AG04449 (cell line): ENCODE measurements at regions of chr3 and their contacts with region 1.

Region 1: GRCh38 chr3:52291508-52292181 is 4.0 kb downstream of the GLYCTK start:
- DNase-seq: no peak
- H3K4me3 ChIP-seq: no peak overlapping the region
- CTCF ChIP-seq: peak; percentile 56

Region 2: DNA sequence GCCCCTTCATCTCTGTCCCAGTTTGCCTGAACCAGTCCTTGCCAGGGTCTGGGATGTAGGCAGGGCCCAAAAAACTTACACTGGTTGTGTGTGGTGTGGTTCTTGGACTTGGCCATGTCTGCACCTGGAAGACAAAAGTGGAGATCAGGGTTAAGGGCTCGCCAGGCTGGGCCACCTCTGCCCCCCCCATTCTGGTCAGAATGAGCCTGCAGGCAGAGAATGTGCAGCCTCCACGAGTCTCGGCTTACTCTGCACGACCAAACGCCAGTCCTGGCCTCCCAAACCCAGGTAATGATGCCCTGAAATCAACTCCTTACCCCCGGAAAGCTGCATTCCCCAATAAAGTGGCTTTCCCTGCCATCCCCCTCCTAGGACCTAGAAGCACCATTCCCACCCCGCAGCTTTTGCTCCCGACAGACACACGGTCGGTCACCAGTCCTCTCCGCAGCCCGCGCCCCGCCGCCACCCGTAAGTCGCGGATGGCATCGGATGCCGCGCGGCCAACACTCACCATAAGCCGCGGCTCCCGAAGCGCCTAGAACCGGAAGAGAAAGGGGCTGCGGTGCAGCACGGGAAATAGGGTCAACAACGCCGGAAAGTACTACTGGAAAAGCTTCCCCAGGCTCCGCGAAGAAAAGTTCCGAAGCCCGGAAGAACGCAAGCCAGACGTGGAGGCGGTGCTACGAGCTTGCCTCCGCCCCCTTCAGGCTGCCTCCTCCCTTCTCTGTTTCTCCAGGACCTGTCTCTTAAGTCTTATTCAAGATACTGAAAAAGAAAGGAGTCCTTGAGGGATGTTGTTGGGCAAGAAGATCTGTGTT is 296.1 kb before region 1 on chr3 and contains the start of gene RPL29:
- CTCF ChIA-PET with region 1: no interaction called
- POLR2A ChIA-PET with region 1: no interaction called
- DNase-seq: peak; percentile 63
- H3K4me3 ChIP-seq: peak within 1 kb of the TSS; percentile 92
- CTCF ChIP-seq: no peak

Region 3: DNA sequence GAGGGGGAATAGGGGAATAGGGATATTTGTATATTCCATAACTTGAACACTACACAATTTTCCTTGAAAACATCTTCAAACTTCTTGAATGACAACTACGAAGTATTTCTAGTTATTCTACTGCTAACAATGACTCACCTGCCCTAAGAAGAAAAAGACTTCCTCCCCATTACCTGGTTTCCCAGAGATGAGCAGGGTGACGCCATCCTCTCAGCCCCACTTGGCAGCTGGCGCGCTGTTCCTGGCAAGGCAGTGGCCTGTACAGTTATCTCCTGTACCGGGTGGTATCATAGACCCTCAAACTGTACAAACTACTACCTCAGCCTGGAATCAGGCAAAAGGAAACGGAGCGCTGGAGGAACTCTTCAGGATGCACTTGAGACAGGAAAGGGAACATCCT is 23.6 kb before region 1 on chr3:
- CTCF ChIA-PET with region 1: no interaction called
- POLR2A ChIA-PET with region 1: no interaction called
- DNase-seq: no peak
- H3K4me3 ChIP-seq: no peak overlapping the region
- CTCF ChIP-seq: no peak

Region 4: GRCh38 chr3:52278510-52279069 is 13.1 kb before region 1 on chr3 and contains the start of gene WDR82:
- CTCF ChIA-PET with region 1: interaction called, 23 read pairs
- POLR2A ChIA-PET with region 1: interaction called, 14 read pairs
- DNase-seq: peak; percentile 38
- H3K4me3 ChIP-seq: peak within 1 kb of the TSS; percentile 98
- CTCF ChIP-seq: peak; percentile 73

Region 5: DNA sequence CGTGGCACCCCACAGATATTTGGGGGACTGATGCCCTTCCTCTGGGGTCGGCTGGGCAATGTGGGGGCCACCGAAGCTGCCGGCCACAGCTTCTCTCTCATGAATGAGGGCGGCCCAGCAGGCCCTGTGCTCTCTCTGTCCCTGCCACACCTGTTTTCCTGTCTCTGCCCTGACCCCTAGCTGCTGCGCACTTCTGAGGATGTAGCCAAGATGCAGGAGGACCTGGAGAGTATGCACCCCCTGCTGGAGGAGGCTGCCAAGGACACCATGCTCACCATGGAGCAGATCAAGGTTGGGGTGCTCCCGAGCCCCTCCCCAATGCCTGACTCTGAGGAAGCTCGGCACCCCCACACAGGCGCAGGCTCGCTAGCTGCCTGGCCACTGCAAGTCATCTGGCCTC is 93.5 kb after region 1 on chr3:
- CTCF ChIA-PET with region 1: interaction called, 18 read pairs
- POLR2A ChIA-PET with region 1: no interaction called
- DNase-seq: no peak
- H3K4me3 ChIP-seq: no peak overlapping the region
- CTCF ChIP-seq: peak; percentile 70

Region 6: GRCh38 chr3:52444860-52445793 is 153.5 kb after region 1 on chr3 and contains the start of gene SEMA3G:
- CTCF ChIA-PET with region 1: interaction called, 11 read pairs
- POLR2A ChIA-PET with region 1: no interaction called
- DNase-seq: no peak
- H3K4me3 ChIP-seq: no peak within 1 kb of the TSS
- CTCF ChIP-seq: peak; percentile 76